ENCODE measurements at regions of chr1 and their contacts with region 1.

Region 1: DNA sequence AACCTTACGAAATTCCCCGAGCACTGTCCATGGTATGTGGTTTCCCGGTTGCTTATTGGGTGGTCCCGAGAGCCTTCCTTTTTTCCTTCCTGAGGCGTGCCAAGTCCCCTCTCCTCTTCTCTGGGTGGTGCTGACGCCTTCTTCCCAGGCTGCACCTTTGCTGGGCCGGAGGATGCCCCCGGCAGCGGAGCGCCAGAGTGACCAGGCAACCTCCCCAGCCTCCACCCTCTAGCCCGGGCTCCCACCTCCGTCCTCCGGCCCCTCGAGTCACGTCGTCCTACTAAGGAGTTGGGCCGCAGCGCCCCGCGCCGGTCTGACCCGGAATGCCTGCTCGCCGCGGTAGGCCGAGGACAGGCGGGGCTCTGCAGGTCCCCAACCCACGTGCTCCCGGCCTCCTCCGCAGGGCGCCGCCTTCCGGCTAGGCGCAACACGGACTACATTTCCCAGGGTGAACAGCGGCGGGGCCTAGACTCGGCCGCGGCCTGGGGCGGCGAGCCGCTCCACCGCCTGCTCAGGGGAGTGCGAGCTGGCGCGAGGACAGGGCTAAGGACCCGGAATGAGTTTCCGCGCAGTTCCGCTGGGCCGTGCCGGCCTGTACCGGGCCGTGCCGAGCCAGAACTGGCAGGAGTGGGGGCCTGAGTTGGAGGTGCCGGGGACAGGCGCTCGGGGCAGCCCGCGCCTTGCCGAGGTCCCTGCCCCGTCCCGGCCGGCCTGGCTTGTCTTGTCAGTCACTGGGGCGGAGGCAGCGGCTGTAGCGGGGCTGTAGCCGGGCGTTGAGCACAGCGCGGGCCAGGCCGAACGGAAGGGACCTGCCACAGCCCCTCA is at the start of gene IPO13:
- DNase-seq: peak; percentile 98
- ATAC-seq: peak; percentile 96
- H3K4me3 Mint-ChIP-seq: peak within 1 kb of the TSS; percentile 94
- H3K27ac Mint-ChIP-seq: peak within 1 kb of the TSS; percentile 96
- H3K4me1 Mint-ChIP-seq: peaks cover 37% of the 10 kb centered on the region
- H3K27me3 Mint-ChIP-seq: no peaks in the 10 kb centered on the region
- total RNA-seq, gene IPO13: 10.7 to 12.5 TPM

Region 2: DNA sequence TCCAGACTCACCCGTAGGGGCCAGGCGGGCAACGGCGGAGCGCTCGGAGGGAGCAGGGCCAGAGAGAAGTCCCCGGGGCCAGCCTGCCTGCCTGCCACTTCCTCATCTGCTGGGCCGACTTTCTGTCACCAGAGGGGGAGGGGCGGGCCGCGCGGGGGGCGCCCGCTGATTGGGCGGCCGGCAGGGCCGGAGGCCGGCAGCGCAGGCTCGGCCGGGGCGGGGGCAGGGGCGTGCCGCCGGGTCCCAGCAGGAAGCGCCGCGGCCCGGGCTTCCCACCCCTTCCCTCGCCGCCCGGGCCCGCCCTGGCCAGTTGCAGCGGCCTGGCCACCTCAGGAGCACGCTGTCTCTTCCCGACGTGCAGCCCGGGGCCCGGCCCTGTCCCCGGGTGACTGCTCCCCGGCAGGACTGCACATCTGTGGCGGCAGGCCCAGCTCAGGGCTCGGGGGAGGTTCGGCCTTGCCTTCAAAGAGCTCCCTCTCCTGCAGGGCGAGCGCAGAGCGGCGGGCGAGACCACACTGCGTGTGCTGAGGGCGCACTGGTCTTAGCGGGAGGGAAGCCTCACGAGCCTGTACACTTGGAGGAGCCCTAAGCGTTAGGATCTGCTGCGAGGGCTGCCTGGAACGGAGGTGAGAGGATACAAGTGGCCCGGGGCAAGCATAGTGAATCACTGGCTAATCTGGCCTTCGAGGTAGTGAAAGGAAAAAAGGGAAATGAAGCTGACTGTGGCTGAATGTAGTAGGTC is 578.4 kb before region 1 on chr1 and contains the start of gene ELOVL1:
- CTCF ChIA-PET with region 1: no interaction called
- POLR2A ChIA-PET with region 1: no interaction called
- intact Hi-C with region 1: loop called in 1 of 2 experiments (anchors 1 kb)
- DNase-seq: peak; percentile 94
- ATAC-seq: peak; percentile 83
- H3K4me3 Mint-ChIP-seq: peak within 1 kb of the TSS; percentile 90
- H3K27ac Mint-ChIP-seq: peak within 1 kb of the TSS; percentile 93
- H3K4me1 Mint-ChIP-seq: peaks cover 30% of the 10 kb centered on the region
- H3K27me3 Mint-ChIP-seq: no peaks in the 10 kb centered on the region
- total RNA-seq, gene ELOVL1: 56.0 to 72.1 TPM

Region 3: DNA sequence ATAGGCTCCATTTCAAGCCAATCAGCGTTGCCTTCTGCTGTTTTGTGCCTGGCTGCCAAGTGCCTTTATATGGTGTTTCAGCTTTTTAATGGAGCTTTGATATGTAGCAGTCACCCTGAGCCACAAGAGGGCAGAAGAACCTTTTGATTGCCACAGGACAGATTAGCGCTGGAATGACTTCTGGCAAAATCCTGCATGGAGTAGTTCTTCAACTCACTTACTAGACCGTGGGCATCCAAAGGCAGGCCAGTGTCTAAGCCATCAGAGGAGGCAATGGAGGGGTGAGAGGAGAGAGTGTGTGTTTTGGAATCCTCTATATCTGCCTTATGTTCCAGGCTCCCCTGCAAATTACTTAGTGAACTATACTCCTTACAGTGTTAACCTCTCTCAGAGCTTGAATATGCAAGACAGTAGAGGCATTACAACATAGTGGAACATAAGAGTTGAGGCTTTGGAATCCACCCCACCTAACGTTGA is 182.9 kb before region 1 on chr1:
- CTCF ChIA-PET with region 1: interaction called, 20 read pairs
- POLR2A ChIA-PET with region 1: no interaction called
- intact Hi-C with region 1: loop called in 1 of 2 experiments (anchors 1 kb)
- DNase-seq: peak; percentile 59
- ATAC-seq: peak; percentile 90
- H3K4me3 Mint-ChIP-seq: no peak overlapping the region
- H3K27ac Mint-ChIP-seq: no peak overlapping the region
- H3K4me1 Mint-ChIP-seq: no peaks in the 10 kb centered on the region
- H3K27me3 Mint-ChIP-seq: no peaks in the 10 kb centered on the region

Region 4: GRCh38 chr1:43974443-43975248 is 28.2 kb after region 1 on chr1 and contains the start of gene ATP6V0B:
- CTCF ChIA-PET with region 1: interaction called, 5 read pairs
- POLR2A ChIA-PET with region 1: interaction called, 5 read pairs
- intact Hi-C with region 1: loop called (anchors 1 kb)
- DNase-seq: peak; percentile 99
- ATAC-seq: peak; percentile 76
- H3K4me3 Mint-ChIP-seq: peak within 1 kb of the TSS; percentile 81
- H3K27ac Mint-ChIP-seq: peak within 1 kb of the TSS; percentile 88
- H3K4me1 Mint-ChIP-seq: peaks cover 48% of the 10 kb centered on the region
- H3K27me3 Mint-ChIP-seq: no peaks in the 10 kb centered on the region
- total RNA-seq, gene ATP6V0B: 39.4 to 75.6 TPM

Region 5: GRCh38 chr1:44049839-44050238 is 103.4 kb after region 1 on chr1:
- CTCF ChIA-PET with region 1: interaction called, 7 read pairs
- POLR2A ChIA-PET with region 1: no interaction called
- intact Hi-C with region 1: loop called in 1 of 2 experiments (anchors 5 kb)
- DNase-seq: no peak
- ATAC-seq: no peak
- H3K4me3 Mint-ChIP-seq: no peak overlapping the region
- H3K27ac Mint-ChIP-seq: no peak overlapping the region
- H3K4me1 Mint-ChIP-seq: peaks cover 21% of the 10 kb centered on the region
- H3K27me3 Mint-ChIP-seq: peaks cover 8% of the 10 kb centered on the region

Measured in activated CD4-positive, alpha-beta T cell treated with anti-CD3 and anti-CD28 coated beads for 36 hours (primary cell).